Posterior vena cava (tissue), 2 donors: ENCODE measurements at regions of chr15 and their contacts with region 1.

Region 1: DNA sequence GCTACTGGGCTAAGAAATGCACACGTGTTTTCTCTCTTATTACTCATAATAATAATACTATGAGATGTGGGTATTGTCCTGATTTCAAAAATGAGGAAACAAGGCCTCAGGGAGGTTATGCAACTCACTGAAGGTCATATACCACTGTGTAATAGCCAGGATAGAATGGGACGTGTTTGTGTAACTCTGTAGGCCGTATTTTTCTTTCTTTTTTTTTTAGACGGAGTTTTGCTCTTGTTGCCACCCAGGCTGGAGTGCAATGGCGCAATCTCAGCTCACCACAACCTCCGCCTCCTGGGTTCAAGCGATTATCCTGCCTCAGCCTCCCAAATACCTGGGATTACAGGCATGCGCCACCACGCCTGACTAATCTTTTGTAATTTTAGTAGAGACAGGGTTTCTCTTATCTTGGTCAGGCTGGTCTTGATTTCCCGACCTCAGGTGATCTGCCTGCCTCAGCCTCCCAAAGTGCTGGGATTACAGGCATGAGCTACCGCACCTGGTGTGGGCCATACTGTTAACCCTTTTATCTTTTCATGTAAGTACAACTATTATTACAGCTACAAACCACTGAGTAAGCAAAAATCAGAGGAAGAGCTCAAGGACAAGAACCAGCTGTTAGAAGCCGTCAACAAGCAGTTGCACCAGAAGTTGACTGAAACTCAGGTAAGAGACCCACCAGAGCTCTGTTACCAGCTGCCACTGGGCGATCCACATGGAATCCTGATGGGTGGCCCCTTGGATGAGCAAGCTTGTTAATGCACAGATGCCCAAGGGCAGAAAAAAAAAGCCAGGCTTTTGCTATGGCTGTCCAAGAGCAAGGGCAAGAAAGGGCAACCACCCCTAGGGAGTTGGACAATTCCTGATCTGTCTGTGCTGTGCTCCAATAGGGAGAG is 6.7 kb downstream of the KNSTRN start:
- DNase-seq: no peak

Region 2: DNA sequence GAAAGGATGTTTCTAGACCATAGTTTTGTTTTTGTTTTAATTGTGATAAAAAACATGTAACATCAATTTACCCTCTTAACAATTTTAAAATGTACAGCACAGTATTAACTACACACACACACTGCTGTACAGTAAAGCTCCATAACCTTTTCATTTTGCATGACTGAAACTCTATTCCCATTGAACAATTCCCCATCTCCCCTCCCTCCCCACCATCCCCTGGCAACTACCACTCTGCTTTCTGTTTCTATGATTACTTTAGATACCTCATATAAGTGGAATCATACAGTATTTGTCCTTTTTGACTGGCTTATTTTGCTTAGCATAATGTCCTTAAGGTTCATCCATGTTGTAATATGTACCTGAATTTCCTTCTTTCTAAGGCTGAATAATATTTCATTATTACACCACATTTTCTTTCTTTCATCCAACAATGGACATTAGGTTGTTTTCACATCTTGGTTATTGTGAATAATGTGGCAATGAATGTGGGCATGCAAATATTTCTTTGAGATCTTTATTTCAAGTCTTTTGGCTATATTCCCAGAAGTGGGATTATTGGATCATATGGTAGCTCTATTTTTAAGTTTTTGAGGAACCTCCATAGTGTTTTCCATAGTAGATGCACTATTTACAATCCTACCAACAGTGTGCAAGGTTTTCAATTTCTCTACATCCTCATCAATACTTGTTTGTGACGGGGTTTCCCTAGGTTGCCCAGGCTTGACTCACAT is 92.3 kb after region 1 on chr15:
- intact Hi-C with region 1: no loop called
- DNase-seq: no peak

Region 3: DNA sequence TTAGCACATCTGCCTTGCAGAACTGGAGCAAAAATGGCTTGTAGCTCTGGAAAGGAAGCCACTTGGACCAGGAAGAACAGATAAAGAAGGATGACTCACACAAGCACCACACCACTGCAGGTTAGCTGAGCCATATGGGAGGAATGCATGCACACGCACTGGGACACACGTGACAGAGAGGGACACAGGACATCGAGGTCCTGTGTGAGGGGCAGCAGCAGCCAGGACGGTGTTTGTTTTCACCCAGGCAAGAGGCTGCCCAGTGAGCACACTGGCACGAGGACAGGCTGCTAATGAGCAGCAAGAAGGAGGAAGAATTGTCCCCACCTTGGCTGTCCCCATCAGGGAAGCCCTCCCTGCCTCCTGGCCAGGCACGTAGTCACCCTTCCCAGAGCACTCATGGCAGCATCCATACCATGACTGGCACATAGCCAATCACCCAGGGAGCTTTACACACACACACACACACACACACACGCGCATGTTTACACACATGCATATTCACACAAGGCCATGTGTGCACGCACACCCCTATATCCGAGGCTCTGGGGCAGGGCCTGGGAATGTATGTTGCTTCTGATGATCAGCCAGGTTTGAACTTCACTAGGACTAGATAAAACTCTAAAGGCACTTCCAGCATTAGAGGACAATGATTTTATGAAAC is 1528.7 kb after region 1 on chr15:
- intact Hi-C with region 1: loop called in 1 of 2 experiments (anchors 5 kb)
- DNase-seq: peak; percentile 73